CD4-positive, alpha-beta memory T cell (primary cell): ENCODE measurements at regions of chr19 and their contacts with region 1.

Region 1: GRCh38 chr19:10095948-10096621 is 6.4 kb downstream of the ANGPTL6 start:
- DNase-seq: peak; percentile 85 to 94 (median 92)
- H3K4me3 ChIP-seq: peak overlapping the region in 1 of 2 donors; percentile 56
- H3K4me3 Mint-ChIP-seq: peak overlapping the region in 7 of 8 donors; percentile 40 to 61 (median 41)
- H3K27ac ChIP-seq: peak overlapping the region; percentile 63
- H3K27ac Mint-ChIP-seq: peak overlapping the region in 6 of 7 donors; percentile 42 to 87 (median 76)
- H3K4me1 ChIP-seq: peaks cover 28% of the 10 kb centered on the region
- H3K4me1 Mint-ChIP-seq: peaks cover 12 to 43% (median 19%) of the 10 kb centered on the region in 4 donors
- H3K27me3 ChIP-seq: no peaks in the 10 kb centered on the region
- H3K27me3 Mint-ChIP-seq: no peaks in the 10 kb centered on the region

Region 2: DNA sequence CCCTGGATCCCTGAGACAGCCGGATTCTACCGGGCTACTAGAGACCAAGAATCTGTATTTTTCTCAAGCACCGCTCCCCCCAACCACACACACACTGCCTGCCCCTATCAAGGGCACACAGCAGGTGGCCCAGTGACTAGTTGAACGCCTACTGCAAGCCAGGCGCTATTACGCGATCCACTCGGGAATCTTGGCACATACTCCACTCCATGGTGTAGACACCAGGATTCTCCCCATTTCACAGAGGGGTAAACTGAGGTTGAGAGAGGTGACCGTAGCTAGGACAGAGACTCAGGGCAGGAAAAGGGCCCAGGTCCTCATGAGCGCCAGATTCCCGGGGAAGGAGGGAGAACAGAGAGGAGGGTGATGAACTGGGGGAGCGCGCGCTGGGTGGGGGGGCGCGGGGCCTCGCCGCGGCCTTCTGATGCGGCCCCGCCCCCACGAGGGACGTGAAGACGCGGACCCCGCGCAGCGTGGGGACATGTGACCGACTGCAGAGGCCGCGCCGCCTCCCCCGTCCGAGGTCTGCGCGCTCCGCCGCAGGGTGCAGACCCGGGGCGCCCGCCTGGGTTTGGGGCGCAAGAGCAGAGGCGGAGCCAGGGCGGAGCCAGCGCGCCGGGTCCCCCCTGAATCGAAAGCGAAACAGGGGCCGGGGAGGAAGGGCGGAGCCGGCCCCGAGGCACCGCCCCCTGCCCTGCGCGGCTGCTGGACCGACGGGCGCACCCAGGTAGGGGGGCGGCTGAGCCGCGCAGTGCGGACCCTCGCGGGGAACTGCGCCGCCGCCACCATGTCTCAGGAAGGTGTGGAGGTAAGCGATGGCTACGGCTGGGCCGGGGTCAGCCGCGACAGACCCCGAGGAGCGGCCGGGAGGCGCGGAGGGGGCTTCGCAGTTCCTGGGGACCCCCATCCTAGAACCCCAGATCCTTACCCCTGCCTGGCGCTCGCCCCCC is 10.2 kb before region 1 on chr19 and contains the start of gene SHFL:
- CTCF ChIA-PET with region 1: interaction called, 4 read pairs
- POLR2A ChIA-PET with region 1: interaction called, 3 read pairs
- intact Hi-C with region 1: loop called (anchors 1 kb)
- DNase-seq: peak; percentile 82 to 86 (median 83)
- H3K4me3 ChIP-seq: peak within 1 kb of the TSS; percentile 76 to 84
- H3K4me3 Mint-ChIP-seq: peak within 1 kb of the TSS; percentile 85 to 90 (median 87)
- H3K27ac ChIP-seq: peak within 1 kb of the TSS; percentile 88
- H3K27ac Mint-ChIP-seq: peak within 1 kb of the TSS; percentile 84 to 91 (median 87)
- H3K4me1 ChIP-seq: peaks cover 12% of the 10 kb centered on the region
- H3K4me1 Mint-ChIP-seq: peaks cover 6 to 17% (median 13%) of the 10 kb centered on the region in 4 donors
- H3K27me3 ChIP-seq: no peaks in the 10 kb centered on the region
- H3K27me3 Mint-ChIP-seq: no peaks in the 10 kb centered on the region
- total RNA-seq, gene SHFL: 112 TPM

Region 3: GRCh38 chr19:10106100-10106936 is 10.2 kb after region 1 on chr19 and contains the start of gene PPAN:
- CTCF ChIA-PET with region 1: interaction called, 99 read pairs
- POLR2A ChIA-PET with region 1: interaction called, 172 read pairs
- intact Hi-C with region 1: loop called (anchors 1 kb)
- DNase-seq: peak; percentile 96 to 98 (median 98)
- H3K4me3 ChIP-seq: peak within 1 kb of the TSS; percentile 58 to 74
- H3K4me3 Mint-ChIP-seq: peak within 1 kb of the TSS; percentile 72 to 92 (median 88)
- H3K27ac ChIP-seq: peak within 1 kb of the TSS; percentile 89
- H3K27ac Mint-ChIP-seq: peak within 1 kb of the TSS; percentile 95 to 100 (median 97)
- H3K4me1 ChIP-seq: peaks cover 77% of the 10 kb centered on the region
- H3K4me1 Mint-ChIP-seq: peaks cover 38 to 86% (median 59%) of the 10 kb centered on the region in 4 donors
- H3K27me3 ChIP-seq: no peaks in the 10 kb centered on the region
- H3K27me3 Mint-ChIP-seq: no peaks in the 10 kb centered on the region
- total RNA-seq, gene PPAN: 92.5 to 102 TPM

Region 4: DNA sequence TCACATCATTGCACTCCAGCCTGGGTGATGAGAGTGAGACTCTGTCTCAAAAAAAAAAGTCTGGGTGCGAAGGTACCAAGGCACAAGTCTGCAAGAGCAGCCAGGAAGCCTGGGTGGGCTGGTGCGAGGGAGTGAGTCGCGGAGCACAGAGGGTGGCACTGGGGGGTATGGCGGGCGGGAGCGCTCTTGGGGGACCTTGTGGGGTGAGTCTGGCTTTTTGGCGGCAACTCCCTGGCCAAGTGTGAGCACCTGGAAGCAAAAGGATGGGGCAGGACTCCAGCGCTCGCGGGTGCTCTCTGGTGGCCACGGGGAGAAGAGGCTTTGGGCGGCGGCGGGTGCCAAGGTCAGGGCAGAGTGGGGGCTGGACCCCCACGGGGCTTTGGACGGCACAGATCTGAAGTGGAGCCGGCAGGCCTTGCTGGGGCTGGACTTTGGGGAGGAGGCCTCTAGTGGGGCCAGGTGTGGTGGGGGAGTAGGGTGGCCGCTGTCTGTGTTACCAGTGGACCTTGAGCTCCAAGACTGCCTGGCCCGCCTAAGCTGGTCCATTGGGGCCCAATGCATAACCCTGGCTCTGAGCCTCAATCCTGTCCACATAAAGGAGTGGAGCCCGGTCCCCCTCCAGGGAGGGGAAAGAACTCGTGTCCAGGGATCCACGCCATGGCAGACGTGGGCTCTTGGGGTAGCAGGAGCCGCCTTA is 17.0 kb after region 1 on chr19:
- CTCF ChIA-PET with region 1: interaction called, 99 read pairs
- POLR2A ChIA-PET with region 1: interaction called, 172 read pairs
- intact Hi-C with region 1: loop called (anchors 1 kb)
- DNase-seq: peak; percentile 65 to 77 (median 68)
- H3K4me3 ChIP-seq: no peak overlapping the region
- H3K4me3 Mint-ChIP-seq: peak overlapping the region; percentile 55 to 89 (median 78)
- H3K27ac ChIP-seq: peak overlapping the region; percentile 66
- H3K27ac Mint-ChIP-seq: peak overlapping the region; percentile 91 to 97 (median 95)
- H3K4me1 ChIP-seq: peaks cover 56% of the 10 kb centered on the region
- H3K4me1 Mint-ChIP-seq: peaks cover 22 to 74% (median 31%) of the 10 kb centered on the region in 4 donors
- H3K27me3 ChIP-seq: no peaks in the 10 kb centered on the region
- H3K27me3 Mint-ChIP-seq: no peaks in the 10 kb centered on the region

Region 5: GRCh38 chr19:10120538-10121189 is 24.6 kb after region 1 on chr19:
- CTCF ChIA-PET with region 1: interaction called, 99 read pairs
- POLR2A ChIA-PET with region 1: interaction called, 172 read pairs
- intact Hi-C with region 1: no loop called
- DNase-seq: no peak
- H3K4me3 ChIP-seq: no peak overlapping the region
- H3K4me3 Mint-ChIP-seq: peak overlapping the region in 3 of 8 donors; percentile 9 to 55 (median 27)
- H3K27ac ChIP-seq: no peak overlapping the region
- H3K27ac Mint-ChIP-seq: no peak overlapping the region
- H3K4me1 ChIP-seq: peaks cover 25% of the 10 kb centered on the region
- H3K4me1 Mint-ChIP-seq: peaks cover 3 to 35% (median 10%) of the 10 kb centered on the region in 4 donors
- H3K27me3 ChIP-seq: no peaks in the 10 kb centered on the region
- H3K27me3 Mint-ChIP-seq: no peaks in the 10 kb centered on the region

Region 6: DNA sequence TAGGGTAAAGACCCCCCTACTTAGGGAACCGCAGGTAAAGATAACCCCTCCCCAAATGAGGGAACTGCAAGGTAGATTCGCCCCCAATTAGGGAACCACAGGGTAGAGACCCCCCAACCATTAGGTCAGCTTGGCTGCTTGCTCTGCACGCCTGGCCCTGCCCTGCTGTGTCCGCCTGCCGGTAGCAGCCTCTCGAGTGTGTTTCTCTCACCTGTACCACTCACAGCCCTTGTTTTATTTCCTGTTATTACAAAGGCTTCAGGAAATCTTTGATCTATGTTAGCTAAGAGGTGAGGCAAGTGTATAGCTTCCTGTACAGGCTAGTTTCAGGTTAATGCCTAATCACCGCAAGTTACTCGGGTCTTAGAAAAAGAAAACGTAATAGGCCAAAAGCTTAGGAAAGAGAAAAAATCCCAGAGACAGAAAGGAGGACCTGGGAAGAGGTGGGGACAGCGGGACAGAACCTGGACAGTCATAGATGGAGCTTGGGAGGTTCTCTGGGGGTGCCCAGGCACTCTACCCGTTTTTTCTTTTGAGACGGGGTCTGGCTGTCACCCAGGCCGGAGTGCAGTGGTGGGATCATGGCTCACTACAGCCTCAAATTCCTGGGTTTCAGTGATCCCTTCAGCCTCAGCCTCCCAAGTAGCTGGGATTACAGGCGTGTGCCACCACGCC is 46.8 kb after region 1 on chr19:
- CTCF ChIA-PET with region 1: interaction called, 16 read pairs
- POLR2A ChIA-PET with region 1: interaction called, 35 read pairs
- intact Hi-C with region 1: no loop called
- DNase-seq: peak; percentile 75 to 82 (median 77)
- H3K4me3 ChIP-seq: peak overlapping the region; percentile 34 to 44
- H3K4me3 Mint-ChIP-seq: peak overlapping the region; percentile 73 to 97 (median 87)
- H3K27ac ChIP-seq: peak overlapping the region; percentile 66
- H3K27ac Mint-ChIP-seq: peak overlapping the region; percentile 93 to 100 (median 99)
- H3K4me1 ChIP-seq: peaks cover 51% of the 10 kb centered on the region
- H3K4me1 Mint-ChIP-seq: peaks cover 18 to 52% (median 41%) of the 10 kb centered on the region in 4 donors
- H3K27me3 ChIP-seq: no peaks in the 10 kb centered on the region
- H3K27me3 Mint-ChIP-seq: no peaks in the 10 kb centered on the region

Region 7: GRCh38 chr19:10194500-10195289 is 98.6 kb after region 1 on chr19 and contains the start of gene DNMT1:
- CTCF ChIA-PET with region 1: no interaction called
- POLR2A ChIA-PET with region 1: interaction called, 10 read pairs
- intact Hi-C with region 1: loop called (anchors 5 kb)
- DNase-seq: peak; percentile 94 to 98 (median 95)
- H3K4me3 ChIP-seq: peak within 1 kb of the TSS; percentile 61 to 62
- H3K4me3 Mint-ChIP-seq: peak within 1 kb of the TSS; percentile 90 to 97 (median 96)
- H3K27ac ChIP-seq: peak within 1 kb of the TSS; percentile 77
- H3K27ac Mint-ChIP-seq: peak within 1 kb of the TSS; percentile 83 to 97 (median 95)
- H3K4me1 ChIP-seq: peaks cover 41% of the 10 kb centered on the region
- H3K4me1 Mint-ChIP-seq: peaks cover 22 to 52% (median 37%) of the 10 kb centered on the region in 4 donors
- H3K27me3 ChIP-seq: no peaks in the 10 kb centered on the region
- H3K27me3 Mint-ChIP-seq: no peaks in the 10 kb centered on the region
- total RNA-seq, gene DNMT1: 208 to 250 TPM